Psoas muscle (tissue), 8 donors: ENCODE measurements at regions of chr19 and their contacts with region 1.

Region 1: DNA sequence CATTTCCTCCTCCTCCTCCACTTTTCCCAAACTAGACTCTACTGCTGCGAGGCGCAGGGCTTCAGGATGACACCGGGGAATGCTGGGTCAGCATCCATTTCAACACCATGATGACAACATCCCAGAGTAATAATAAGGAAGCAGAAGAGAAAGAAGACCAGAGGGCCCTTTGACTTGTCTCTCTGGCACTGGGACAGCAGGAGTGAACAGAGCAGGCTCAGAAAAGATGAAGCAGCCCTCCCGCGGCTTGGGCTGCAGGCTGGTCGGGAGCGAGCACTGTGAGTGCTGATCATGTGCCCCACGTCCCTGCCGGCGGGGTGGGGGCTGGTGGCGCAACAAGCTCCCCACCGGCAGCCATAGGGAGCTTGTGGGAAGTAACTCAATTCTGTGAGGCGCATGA is 30.5 kb downstream of the RANBP3 start:
- DNase-seq: peak; percentile 68 to 79
- ATAC-seq: peak; percentile 13 to 51 (median 40)
- H3K4me3 ChIP-seq: no peak overlapping the region
- H3K27ac ChIP-seq: peak overlapping the region; percentile 30
- H3K4me1 ChIP-seq: peaks cover 28% of the 10 kb centered on the region
- H3K27me3 ChIP-seq: no peaks in the 10 kb centered on the region
- CTCF ChIP-seq: no peak

Region 2: DNA sequence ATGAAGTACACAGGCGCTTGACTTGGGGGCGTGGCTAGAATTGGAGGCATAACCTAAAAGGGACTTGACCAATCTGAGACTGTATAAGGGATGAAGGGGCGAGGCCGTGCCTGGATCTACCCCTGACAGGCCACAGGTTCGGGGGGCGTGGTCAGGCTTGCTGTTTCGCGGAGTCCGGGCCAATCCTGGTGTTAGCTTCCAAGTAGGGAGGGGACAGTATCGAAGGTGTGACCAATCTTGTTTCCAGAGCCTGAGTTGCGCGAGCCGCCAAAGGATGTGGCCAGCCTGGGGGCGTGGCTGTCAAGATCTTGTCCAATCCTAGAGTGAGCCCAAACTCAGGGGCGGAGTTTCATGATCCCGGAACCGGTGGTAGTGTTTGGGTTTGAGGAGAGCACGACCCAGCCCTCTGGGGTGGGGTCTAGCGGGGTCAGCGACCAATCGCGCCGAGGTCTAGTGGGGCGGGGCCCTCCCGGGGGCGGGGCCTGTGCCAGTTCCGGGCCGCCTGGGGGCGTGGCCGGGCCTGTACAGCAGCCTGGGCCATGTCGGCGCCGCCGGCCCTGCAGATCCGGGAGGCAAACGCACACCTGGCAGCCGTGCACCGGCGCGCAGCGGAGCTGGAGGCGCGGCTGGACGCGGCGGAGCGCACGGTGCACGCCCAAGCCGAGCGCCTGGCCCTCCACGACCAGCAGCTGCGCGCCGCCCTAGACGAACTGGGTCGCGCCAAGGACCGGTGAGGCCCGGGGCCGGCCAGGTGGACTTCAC is 42.9 kb before region 1 on chr19 and contains the start of gene VMAC:
- intact Hi-C with region 1: loop called in 1 of 2 experiments (anchors 5 kb)
- DNase-seq: peak; percentile 100
- ATAC-seq: peak; percentile 81 to 84 (median 82)
- H3K4me3 ChIP-seq: peak within 1 kb of the TSS; percentile 98
- H3K27ac ChIP-seq: peak within 1 kb of the TSS; percentile 92
- H3K4me1 ChIP-seq: peaks cover 18% of the 10 kb centered on the region
- H3K27me3 ChIP-seq: no peaks in the 10 kb centered on the region
- CTCF ChIP-seq: no peak
- total RNA-seq, gene VMAC: 0.73 to 3.0 (median 1.2) TPM